ENCODE measurements at regions of chr10 and their contacts with region 1.

Region 1: DNA sequence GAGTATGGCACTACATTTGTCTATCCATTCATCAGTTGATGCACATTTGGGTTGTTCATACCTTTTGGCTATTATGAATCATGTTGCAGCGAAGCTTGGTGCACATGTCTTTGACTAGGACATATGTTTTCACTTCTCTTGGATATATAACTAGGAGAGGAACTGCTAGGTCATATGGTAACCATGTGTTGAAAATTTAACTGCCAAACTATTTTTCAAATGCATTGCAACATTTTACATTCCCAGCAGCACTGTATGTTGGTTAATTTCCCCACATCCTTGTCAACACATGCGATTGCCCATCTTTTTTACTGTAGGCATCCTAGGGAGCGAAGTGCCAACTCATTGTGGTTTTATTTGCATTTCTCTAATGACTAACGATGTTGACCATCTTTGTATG is 183.4 kb downstream of the PRKCQ start:
- DNase-seq: peak; percentile 92
- H3K4me3 Mint-ChIP-seq: no peak overlapping the region
- H3K27ac Mint-ChIP-seq: peak overlapping the region; percentile 1
- H3K4me1 Mint-ChIP-seq: peaks cover 26% of the 10 kb centered on the region
- H3K27me3 Mint-ChIP-seq: no peaks in the 10 kb centered on the region
- CTCF ChIP-seq: no peak

Region 2: DNA sequence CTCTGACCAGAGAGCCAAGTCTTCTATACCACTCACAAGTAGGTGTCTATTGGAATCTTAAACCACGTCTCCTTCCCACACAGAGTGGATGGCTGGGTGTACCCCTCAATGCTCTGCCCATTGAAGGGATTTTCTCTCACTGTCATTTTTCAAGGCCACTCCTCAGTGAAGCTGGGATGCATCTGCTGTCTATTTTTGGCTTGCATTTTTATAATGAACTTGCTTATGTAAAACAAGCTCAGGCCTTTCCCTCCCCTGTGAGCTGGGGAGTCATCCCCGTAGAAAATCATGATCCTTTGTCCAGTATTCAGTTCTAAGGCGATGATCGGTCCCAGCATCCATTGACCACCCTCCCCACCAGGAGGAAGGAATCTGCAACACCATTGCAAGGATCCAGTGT is 317.6 kb before region 1 on chr10:
- CTCF ChIA-PET with region 1: no interaction called
- POLR2A ChIA-PET with region 1: no interaction called
- intact Hi-C with region 1: no loop called
- DNase-seq: no peak
- H3K4me3 Mint-ChIP-seq: no peak overlapping the region
- H3K27ac Mint-ChIP-seq: no peak overlapping the region
- H3K4me1 Mint-ChIP-seq: peaks cover 6% of the 10 kb centered on the region
- H3K27me3 Mint-ChIP-seq: peaks cover 62% of the 10 kb centered on the region
- CTCF ChIP-seq: no peak

Region 3: DNA sequence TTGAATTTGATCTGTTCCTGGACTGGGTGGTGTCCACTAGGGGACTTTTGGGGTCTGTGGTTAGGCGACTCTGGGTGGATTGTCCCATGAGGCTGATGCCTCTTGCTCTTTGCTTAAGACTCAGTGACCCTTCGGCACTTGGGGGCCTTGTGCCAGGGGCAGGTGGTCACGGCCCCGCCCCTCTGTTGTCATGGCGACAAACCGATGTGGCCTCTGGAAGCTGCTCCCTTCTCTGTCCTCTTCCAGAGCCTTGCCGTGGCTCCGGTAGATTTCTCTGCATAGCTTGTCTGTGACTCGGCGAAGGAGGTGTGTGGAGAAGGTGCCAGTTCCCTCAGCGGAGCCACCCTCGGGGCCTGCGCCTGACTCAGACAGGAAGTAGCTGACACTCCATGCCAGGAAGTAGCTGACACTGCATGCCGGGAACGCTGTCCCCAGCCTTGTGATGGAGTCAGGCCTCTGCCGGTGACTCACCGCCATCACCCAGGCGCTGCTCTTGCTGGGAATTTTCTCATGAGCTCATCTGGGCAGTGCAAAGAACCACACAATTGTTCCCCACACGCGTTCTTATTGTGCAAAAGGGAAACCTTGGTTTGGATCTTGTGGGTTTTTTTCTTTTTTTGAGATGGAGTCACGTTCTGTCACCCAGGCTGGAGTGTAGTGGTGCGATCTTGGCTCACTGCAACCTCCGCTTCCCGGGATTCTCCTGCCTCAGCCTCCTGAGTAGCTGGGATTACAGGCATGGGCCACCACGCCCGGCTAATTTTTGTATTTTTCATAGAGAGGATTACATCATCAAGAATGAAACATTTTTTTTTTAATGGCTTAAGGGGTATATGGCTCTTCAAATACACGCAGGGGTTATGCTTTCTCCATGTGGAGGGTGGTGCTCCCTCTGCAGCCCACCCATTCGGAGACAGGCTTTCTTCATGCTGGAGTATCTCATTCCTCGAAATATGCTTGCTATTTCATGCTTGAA is 121.3 kb before region 1 on chr10:
- CTCF ChIA-PET with region 1: interaction called, 3 read pairs
- POLR2A ChIA-PET with region 1: interaction called, 3 read pairs
- intact Hi-C with region 1: loop called (anchors 1 kb)
- DNase-seq: peak; percentile 99
- H3K4me3 Mint-ChIP-seq: peak overlapping the region; percentile 68
- H3K27ac Mint-ChIP-seq: peak overlapping the region; percentile 94
- H3K4me1 Mint-ChIP-seq: peaks cover 11% of the 10 kb centered on the region
- H3K27me3 Mint-ChIP-seq: no peaks in the 10 kb centered on the region
- CTCF ChIP-seq: no peak

Region 4: GRCh38 chr10:6507311-6507710 is 110.7 kb after region 1 on chr10:
- CTCF ChIA-PET with region 1: no interaction called
- POLR2A ChIA-PET with region 1: no interaction called
- intact Hi-C with region 1: no loop called
- DNase-seq: no peak
- H3K4me3 Mint-ChIP-seq: no peak overlapping the region
- H3K27ac Mint-ChIP-seq: no peak overlapping the region
- H3K4me1 Mint-ChIP-seq: peaks cover 13% of the 10 kb centered on the region
- H3K27me3 Mint-ChIP-seq: no peaks in the 10 kb centered on the region
- CTCF ChIP-seq: no peak

Measured in MCF 10A (cell line).